Posterior vena cava (tissue), 2 donors: ENCODE measurements at regions of chr12 and their contacts with region 1.

Region 1: GRCh38 chr12:1117970-1118563 is 127.0 kb downstream of the ERC1 start:
- DNase-seq: peak; percentile 87

Region 2: DNA sequence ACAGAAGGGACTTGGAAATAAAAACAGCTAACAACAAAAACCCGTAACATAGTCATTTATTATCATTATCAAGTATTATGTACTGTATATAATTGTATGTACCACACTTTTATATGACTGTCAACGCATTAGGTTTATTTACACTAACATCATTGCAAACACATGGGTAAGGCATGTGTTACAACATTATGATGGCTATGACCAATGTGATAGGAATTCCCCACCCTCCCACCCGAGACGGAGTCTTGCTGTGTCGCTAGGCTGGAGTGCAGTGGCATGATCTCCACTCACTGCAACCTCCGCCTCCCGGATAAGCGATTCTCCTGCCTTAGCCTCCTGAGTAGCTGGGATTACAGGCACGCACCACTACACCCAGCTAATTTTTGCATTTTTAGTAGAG is 44.4 kb before region 1 on chr12:
- intact Hi-C with region 1: no loop called
- DNase-seq: no peak

Region 3: GRCh38 chr12:1262011-1262410 is 143.9 kb after region 1 on chr12:
- intact Hi-C with region 1: no loop called
- DNase-seq: no peak

Region 4: GRCh38 chr12:1583421-1584078 is 465.5 kb after region 1 on chr12:
- intact Hi-C with region 1: loop called (anchors 5 to 10 kb)
- DNase-seq: no peak